Activated T-helper 1 cell treated with anti-CD3 and anti-CD28 coated beads, Interleukin-12 subunit alpha, Interleukin-12 subunit beta, Interleukin-2, Interleukin-4 antibody, amounts not matched to agents 30 ng/mL and 10 ng/mL and 1 ng/mL, durations not matched to agents 14 hours and 24 hours and 36 hours (primary cell): ENCODE measurements at regions of chr2 and their contacts with region 1.

Region 1: GRCh38 chr2:222969491-222969890 is 82.5 kb upstream of the KCNE4 start:
- DNase-seq: no peak
- H3K4me3 Mint-ChIP-seq: no peak overlapping the region
- H3K27ac Mint-ChIP-seq: no peak overlapping the region
- H3K4me1 Mint-ChIP-seq: no peaks in the 10 kb centered on the region
- H3K27me3 Mint-ChIP-seq: peaks cover 6% of the 10 kb centered on the region

Region 2: GRCh38 chr2:223101340-223102039 is 132.0 kb after region 1 on chr2:
- intact Hi-C with region 1: loop called (anchors 5 kb)
- DNase-seq: no peak
- H3K4me3 Mint-ChIP-seq: no peak overlapping the region
- H3K27ac Mint-ChIP-seq: no peak overlapping the region
- H3K4me1 Mint-ChIP-seq: no peaks in the 10 kb centered on the region
- H3K27me3 Mint-ChIP-seq: peaks cover 1% of the 10 kb centered on the region

Region 3: DNA sequence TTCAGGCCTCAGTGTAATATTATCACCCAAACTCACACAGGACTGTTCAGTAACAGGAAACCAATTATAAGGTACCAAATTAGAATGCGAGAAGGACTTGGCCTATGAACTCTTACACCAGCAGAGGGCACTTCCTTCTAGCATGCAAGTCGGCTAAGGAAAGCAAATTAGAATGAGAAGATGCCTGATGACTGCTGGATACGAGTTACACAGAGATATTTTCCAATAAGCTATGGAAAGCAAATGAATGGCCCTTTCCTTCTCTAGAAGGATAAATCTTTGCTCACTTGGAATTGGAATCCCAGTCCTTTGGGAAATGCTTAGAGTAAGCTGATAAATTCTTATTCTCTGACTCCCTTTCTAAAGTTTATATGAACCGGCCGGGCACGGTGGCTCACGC is 758.1 kb after region 1 on chr2:
- intact Hi-C with region 1: loop called (anchors 5 kb)
- DNase-seq: peak; percentile 1
- H3K4me3 Mint-ChIP-seq: no peak overlapping the region
- H3K27ac Mint-ChIP-seq: no peak overlapping the region
- H3K4me1 Mint-ChIP-seq: no peaks in the 10 kb centered on the region
- H3K27me3 Mint-ChIP-seq: no peaks in the 10 kb centered on the region

Region 4: GRCh38 chr2:223797811-223798721 is 828.6 kb after region 1 on chr2:
- intact Hi-C with region 1: loop called (anchors 2 kb)
- DNase-seq: no peak
- H3K4me3 Mint-ChIP-seq: no peak overlapping the region
- H3K27ac Mint-ChIP-seq: no peak overlapping the region
- H3K4me1 Mint-ChIP-seq: peaks cover 6% of the 10 kb centered on the region
- H3K27me3 Mint-ChIP-seq: no peaks in the 10 kb centered on the region

Region 5: GRCh38 chr2:224284134-224284946 is 1314.8 kb after region 1 on chr2:
- intact Hi-C with region 1: loop called (anchors 2 kb)
- DNase-seq: no peak
- H3K4me3 Mint-ChIP-seq: no peak overlapping the region
- H3K27ac Mint-ChIP-seq: no peak overlapping the region
- H3K4me1 Mint-ChIP-seq: no peaks in the 10 kb centered on the region
- H3K27me3 Mint-ChIP-seq: peaks cover 21% of the 10 kb centered on the region